Activated T-helper 2 cell treated with anti-CD3 and anti-CD28 coated beads, Interferon-gamma antibody, Interleukin-2, Interleukin-4, amounts not matched to agents 10 μg/mL and 5 μg/mL and 100 μg/mL, durations not matched to agents 14 hours and 24 hours and 36 hours (primary cell): ENCODE measurements at regions of chr3 and their contacts with region 1.

Region 1: GRCh38 chr3:18872466-18872865 is 275.8 kb upstream of the KCNH8 start:
- DNase-seq: no peak
- H3K4me3 Mint-ChIP-seq: no peak overlapping the region
- H3K27ac Mint-ChIP-seq: no peak overlapping the region
- H3K4me1 Mint-ChIP-seq: peaks cover 43% of the 10 kb centered on the region
- H3K27me3 Mint-ChIP-seq: no peaks in the 10 kb centered on the region

Region 2: DNA sequence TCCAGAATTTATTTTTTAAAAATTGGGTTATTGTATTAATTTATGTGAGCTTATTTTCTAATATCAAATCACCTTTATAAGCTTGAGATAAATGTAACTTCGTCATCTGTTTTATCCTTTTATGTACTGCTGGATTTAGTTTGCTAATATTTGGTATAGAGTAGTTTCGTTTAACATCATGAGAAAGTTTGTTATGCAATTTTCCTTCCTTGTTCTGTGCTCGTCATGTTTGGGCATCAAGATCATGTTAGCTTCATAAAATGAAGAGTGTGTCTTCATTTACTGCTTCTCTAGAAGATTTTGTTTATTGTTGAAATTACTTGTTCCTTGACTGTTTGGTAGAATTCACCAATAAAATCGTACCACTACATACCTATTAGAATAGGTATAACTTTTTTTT is 185.2 kb before region 1 on chr3:
- intact Hi-C with region 1: no loop called
- DNase-seq: no peak
- H3K4me3 Mint-ChIP-seq: no peak overlapping the region
- H3K27ac Mint-ChIP-seq: no peak overlapping the region
- H3K4me1 Mint-ChIP-seq: peaks cover 16% of the 10 kb centered on the region
- H3K27me3 Mint-ChIP-seq: no peaks in the 10 kb centered on the region

Region 3: GRCh38 chr3:18790384-18790783 is 82.1 kb before region 1 on chr3:
- intact Hi-C with region 1: loop called (anchors 5 kb)
- DNase-seq: no peak
- H3K4me3 Mint-ChIP-seq: no peak overlapping the region
- H3K27ac Mint-ChIP-seq: no peak overlapping the region
- H3K4me1 Mint-ChIP-seq: peaks cover 6% of the 10 kb centered on the region
- H3K27me3 Mint-ChIP-seq: no peaks in the 10 kb centered on the region

Region 4: GRCh38 chr3:18830087-18830486 is 42.4 kb before region 1 on chr3:
- intact Hi-C with region 1: loop called (anchors 1 kb)
- DNase-seq: no peak
- H3K4me3 Mint-ChIP-seq: no peak overlapping the region
- H3K27ac Mint-ChIP-seq: peak overlapping the region; percentile 35
- H3K4me1 Mint-ChIP-seq: peaks cover 22% of the 10 kb centered on the region
- H3K27me3 Mint-ChIP-seq: no peaks in the 10 kb centered on the region

Region 5: DNA sequence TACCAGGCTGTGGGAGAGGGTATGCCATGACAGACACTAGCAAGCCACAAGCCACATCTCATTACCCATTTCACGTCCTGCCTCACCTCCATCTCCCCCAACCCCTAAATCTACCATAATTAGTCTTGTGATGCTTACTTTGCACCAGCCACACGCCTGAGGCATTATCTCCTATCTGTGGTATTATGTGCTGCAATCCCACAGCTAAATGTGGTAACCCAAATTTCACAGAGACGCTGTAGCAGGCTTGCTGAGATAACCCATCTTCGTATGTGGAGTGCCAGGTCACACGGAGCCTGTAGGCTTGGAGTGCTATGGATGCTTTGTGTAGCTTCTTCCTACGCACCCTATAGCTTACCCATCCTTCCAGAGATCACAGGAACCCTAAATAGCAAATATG is 19.2 kb after region 1 on chr3:
- intact Hi-C with region 1: loop called (anchors 1 kb)
- DNase-seq: peak; percentile 44
- H3K4me3 Mint-ChIP-seq: no peak overlapping the region
- H3K27ac Mint-ChIP-seq: no peak overlapping the region
- H3K4me1 Mint-ChIP-seq: peaks cover 30% of the 10 kb centered on the region
- H3K27me3 Mint-ChIP-seq: peaks cover 16% of the 10 kb centered on the region